ENCODE measurements at regions of chr3 and their contacts with region 1.

Region 1: DNA sequence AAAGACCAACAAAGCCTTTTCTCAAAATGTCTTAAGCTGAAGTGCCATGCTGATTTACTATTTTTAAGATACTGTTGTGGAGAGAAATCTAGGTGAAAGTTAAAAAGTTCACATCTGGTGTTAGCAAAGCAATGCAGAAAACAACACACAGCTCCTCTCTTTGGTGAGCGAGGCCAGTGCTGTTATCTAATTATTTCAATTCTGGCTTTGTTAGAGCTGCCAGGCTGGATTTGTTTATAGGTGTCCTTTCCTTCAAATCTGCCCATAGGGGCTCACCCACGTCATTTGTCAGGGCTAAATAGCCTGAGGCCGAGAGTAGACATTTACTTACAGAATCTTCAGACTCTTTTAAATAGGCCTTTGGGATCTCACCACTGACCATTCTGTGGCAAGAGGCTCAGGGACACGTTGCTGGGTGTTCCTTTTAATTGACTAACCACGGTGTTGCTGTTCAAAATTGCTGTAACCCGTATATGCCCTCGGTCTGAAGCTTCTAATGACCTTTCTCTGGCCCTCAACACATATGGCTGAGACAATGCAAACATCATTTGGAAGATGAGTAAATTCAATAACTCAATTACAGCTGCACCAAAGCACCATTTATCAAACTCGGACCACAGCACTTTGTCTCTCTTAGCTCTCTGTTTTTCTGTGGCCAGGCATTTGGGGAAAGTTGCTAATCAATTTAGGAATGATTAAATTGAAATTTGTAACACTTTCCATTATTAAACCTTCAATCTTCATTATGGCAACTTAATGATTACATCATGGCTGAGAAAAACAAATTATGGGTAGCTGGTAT is 152.6 kb downstream of the PDZRN3 start:
- DNase-seq: no peak
- H3K4me3 ChIP-seq: no peak overlapping the region
- H3K27ac ChIP-seq: peak overlapping the region; percentile 17 to 70
- H3K4me1 ChIP-seq: peaks cover under 1 to 12% of the 10 kb centered on the region in 2 donors
- H3K27me3 ChIP-seq: no peaks in the 10 kb centered on the region
- CTCF ChIP-seq: no peak
- POLR2A ChIP-seq: no peak

Region 2: GRCh38 chr3:73448761-73449301 is 23.4 kb before region 1 on chr3:
- intact Hi-C with region 1: no loop called
- DNase-seq: no peak
- H3K4me3 ChIP-seq: no peak overlapping the region
- H3K27ac ChIP-seq: peak overlapping the region in 1 of 2 donors; percentile 16
- H3K4me1 ChIP-seq: peaks cover 0 to 20% of the 10 kb centered on the region in 2 donors
- H3K27me3 ChIP-seq: no peaks in the 10 kb centered on the region
- CTCF ChIP-seq: no peak
- POLR2A ChIP-seq: no peak

Region 3: DNA sequence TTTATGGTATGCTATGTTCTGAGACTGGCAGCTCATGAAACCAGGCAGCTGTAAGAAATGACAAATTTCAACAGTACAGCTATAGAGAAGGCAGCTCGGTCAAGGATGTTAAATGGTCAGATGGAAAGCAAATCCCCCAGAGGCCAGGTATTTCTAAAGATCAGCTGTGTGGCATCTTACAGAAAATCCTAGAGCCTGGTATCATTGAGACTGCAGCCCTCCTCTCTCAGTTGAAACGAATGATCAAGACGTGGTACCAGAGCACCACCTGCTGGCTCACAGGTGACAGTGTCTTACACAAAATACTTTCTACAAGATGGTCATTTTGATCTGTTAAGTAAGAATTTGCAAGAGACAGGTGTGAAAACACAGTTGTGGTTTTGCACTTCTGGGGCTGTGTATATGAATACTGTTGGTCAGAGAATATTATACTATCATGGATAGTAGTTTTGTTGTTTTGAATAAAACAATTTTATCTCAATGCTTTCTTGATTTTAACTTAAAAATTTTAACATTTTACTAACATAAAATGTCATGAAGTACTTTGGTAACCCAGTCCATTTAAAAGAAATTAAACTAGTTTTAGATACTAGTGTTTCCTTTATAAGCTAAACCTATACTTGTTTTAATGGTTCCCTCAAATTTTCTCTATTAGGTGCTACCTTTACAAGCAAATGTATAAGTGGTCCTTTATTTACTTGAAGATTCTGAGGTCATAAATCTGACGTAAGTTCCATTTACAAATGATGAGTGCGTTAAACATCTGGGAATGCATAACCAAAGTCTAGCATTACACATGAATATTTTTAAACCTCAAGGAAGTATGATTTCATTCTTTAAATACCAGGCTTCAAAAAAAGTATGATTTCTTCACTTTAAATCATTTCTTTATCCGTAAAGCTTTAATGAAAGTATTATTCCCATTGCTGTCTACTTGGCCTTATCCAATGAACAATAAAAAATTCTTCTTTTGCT is 30.7 kb after region 1 on chr3:
- intact Hi-C with region 1: no loop called
- DNase-seq: peak; percentile 77 to 83
- H3K4me3 ChIP-seq: no peak overlapping the region
- H3K27ac ChIP-seq: peak overlapping the region in 1 of 2 donors; percentile 34
- H3K4me1 ChIP-seq: peaks cover 3 to 13% of the 10 kb centered on the region in 2 donors
- H3K27me3 ChIP-seq: no peaks in the 10 kb centered on the region
- CTCF ChIP-seq: peak; percentile 73 to 92 (median 82)
- POLR2A ChIP-seq: no peak

Region 4: DNA sequence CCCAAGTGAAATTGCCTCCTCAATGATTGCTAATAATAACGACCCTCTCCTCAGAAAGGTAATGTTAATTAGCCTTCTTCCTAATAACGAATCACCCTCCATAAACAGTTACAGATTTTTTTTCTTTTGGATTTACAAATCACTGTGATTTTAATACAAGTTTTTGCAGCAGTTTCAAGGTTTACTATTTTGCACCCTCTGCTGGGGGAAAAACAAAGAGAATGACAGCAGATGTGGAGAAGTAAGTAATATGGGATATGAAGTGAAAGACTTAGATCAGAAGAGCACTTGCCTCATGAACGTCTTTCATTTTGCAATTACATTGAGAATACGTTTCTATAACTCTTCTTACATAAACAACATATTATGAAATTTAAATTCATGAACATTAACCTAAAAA is 1158.4 kb after region 1 on chr3:
- intact Hi-C with region 1: loop called (anchors 5 kb)
- DNase-seq: no peak
- H3K4me3 ChIP-seq: no peak overlapping the region
- H3K27ac ChIP-seq: no peak overlapping the region
- H3K4me1 ChIP-seq: no peaks in the 10 kb centered on the region
- H3K27me3 ChIP-seq: no peaks in the 10 kb centered on the region
- CTCF ChIP-seq: peak in 1 of 4 experiments; percentile 7
- POLR2A ChIP-seq: no peak

Measured in uterus (tissue), 4 donors.